Aorta (tissue), 5 donors: ENCODE measurements at regions of chr10 and their contacts with region 1.

Region 1: GRCh38 chr10:3467052-3467951 is 294.7 kb upstream of the PITRM1 start:
- DNase-seq: peak; percentile 87 to 89
- ATAC-seq: peak; percentile 81
- H3K4me3 ChIP-seq: no peak overlapping the region
- H3K27ac ChIP-seq: peak overlapping the region in 1 of 2 donors; percentile 10
- H3K4me1 ChIP-seq: no peaks in the 10 kb centered on the region
- H3K27me3 ChIP-seq: no peaks in the 10 kb centered on the region

Region 2: DNA sequence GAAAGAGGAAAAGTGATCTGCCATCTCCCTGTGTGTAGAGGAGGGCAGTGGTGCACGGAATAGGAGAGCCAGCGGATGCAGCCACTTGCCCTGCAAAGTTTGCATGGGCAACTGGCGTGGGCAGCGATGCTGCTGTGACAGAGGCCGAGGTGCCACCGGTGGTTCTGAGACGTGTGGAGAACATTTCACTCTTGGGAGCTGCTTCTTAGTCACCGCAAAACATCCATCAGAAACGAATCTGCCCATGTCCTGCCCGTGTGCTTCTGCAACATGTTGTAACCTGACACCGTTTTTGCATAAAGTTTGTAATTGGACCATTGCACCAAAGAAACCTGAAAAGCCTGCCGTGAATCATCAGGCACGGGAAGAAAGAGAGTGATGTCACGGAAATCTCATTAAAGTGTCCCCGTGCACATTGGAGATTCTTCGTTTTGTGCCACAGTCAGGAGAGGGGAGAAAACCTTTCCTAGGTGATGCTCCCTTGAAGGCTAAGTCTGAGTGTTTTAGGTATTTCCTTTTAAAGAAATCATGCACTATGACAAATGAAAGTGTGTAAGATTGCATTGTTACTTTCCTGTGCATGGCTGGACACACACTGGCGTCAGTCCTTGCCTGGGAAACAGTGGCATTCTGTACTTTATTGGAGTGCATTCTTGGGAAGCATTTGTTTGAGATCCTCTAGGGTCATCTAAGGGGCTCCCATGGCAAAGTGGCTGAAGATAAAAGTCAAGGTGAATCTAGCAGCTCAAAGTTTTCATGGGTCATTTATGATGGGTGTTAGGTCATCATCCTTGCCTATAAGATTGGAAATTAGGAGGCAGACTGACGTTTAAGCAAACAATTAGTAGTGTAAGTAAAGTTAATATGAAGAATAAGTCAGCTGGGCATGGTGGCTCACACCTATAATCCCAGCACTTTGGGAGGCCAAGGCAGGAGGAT is 15.2 kb after region 1 on chr10:
- intact Hi-C with region 1: no loop called
- DNase-seq: peak in 1 of 2 donors; percentile 61
- ATAC-seq: peak; percentile 78
- H3K4me3 ChIP-seq: no peak overlapping the region
- H3K27ac ChIP-seq: peak overlapping the region in 1 of 2 donors; percentile 18
- H3K4me1 ChIP-seq: no peaks in the 10 kb centered on the region
- H3K27me3 ChIP-seq: no peaks in the 10 kb centered on the region

Region 3: GRCh38 chr10:3494131-3494837 is 27.0 kb after region 1 on chr10:
- intact Hi-C with region 1: loop called in 1 of 2 experiments (anchors 1 kb)
- DNase-seq: peak in 1 of 2 donors; percentile 79
- ATAC-seq: peak; percentile 85
- H3K4me3 ChIP-seq: no peak overlapping the region
- H3K27ac ChIP-seq: peak overlapping the region; percentile 54 to 90
- H3K4me1 ChIP-seq: no peaks in the 10 kb centered on the region
- H3K27me3 ChIP-seq: no peaks in the 10 kb centered on the region

Region 4: GRCh38 chr10:3525832-3526449 is 58.6 kb after region 1 on chr10:
- intact Hi-C with region 1: loop called in 1 of 2 experiments (anchors 5 kb)
- DNase-seq: peak in 1 of 2 donors; percentile 75
- ATAC-seq: no peak
- H3K4me3 ChIP-seq: no peak overlapping the region
- H3K27ac ChIP-seq: peak overlapping the region in 1 of 2 donors; percentile 72
- H3K4me1 ChIP-seq: peaks cover 0 to 5% of the 10 kb centered on the region in 2 donors
- H3K27me3 ChIP-seq: no peaks in the 10 kb centered on the region